Heart right ventricle (tissue), 16 donors: ENCODE measurements at regions of chr16 and their contacts with region 1.

Region 1: GRCh38 chr16:48054881-48055601 is 100.8 kb downstream of the ABCC12 start:
- DNase-seq: peak; percentile 24 to 47
- ATAC-seq: peak; percentile 47 to 91 (median 76)
- H3K4me3 ChIP-seq: peak overlapping the region in 3 of 10 donors; percentile 16 to 28 (median 20)
- H3K27ac ChIP-seq: no peak overlapping the region
- H3K4me1 ChIP-seq: peaks cover 0 to 24% (median 5%) of the 10 kb centered on the region in 9 donors
- H3K27me3 ChIP-seq: peaks cover 0 to 9% (median 0%) of the 10 kb centered on the region in 7 donors
- CTCF ChIP-seq: peak; percentile 54 to 85 (median 76)

Region 2: DNA sequence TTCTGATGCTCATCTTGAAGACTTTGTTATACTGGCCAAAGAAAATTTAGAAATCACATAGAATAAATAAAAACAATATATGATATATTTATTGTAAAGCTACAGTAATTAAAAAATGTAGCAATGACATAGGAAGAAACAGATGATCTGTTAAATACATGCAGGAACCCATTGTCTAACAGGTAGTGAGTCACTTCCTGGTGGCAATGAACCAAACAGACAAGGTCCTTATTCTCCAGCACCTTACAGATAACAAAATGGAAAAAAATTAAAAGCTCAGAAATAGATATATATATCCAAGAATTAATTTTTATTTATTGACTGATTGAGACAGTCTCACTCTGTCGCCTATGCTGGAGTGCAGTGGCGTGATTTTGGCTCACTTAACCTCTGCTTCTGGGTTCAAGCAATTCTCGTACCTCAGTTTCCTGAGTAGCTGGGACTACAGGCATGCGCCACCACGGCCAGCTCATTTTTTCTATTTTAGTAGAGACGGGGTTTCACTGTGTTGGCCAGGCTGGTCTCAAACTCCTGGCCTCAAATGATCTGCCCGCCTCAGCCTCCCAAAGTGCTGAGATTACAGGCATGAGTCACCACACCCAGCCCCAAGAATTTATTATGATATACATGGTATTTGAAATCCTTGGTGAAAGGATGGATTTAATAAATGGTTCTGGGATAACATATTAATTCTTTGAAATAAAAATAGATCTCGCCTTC is 918.8 kb before region 1 on chr16:
- intact Hi-C with region 1: loop called in 6 of 10 experiments (anchors 1 to 10 kb)
- DNase-seq: peak in 1 of 2 donors; percentile 44
- ATAC-seq: peak in 4 of 8 donors; percentile 52 to 80 (median 74)
- H3K4me3 ChIP-seq: no peak overlapping the region
- H3K27ac ChIP-seq: peak overlapping the region in 7 of 10 donors; percentile 16 to 67 (median 27)
- H3K4me1 ChIP-seq: peaks cover 0 to 9% (median 0%) of the 10 kb centered on the region in 9 donors
- H3K27me3 ChIP-seq: no peaks in the 10 kb centered on the region
- CTCF ChIP-seq: no peak

Region 3: GRCh38 chr16:48156790-48157209 is 101.8 kb after region 1 on chr16:
- intact Hi-C with region 1: loop called in 2 of 10 experiments (anchors 5 to 10 kb)
- DNase-seq: peak; percentile 87 to 89
- ATAC-seq: peak; percentile 83 to 95 (median 92)
- H3K4me3 ChIP-seq: peak overlapping the region in 5 of 10 donors; percentile 5 to 31 (median 21)
- H3K27ac ChIP-seq: peak overlapping the region in 7 of 10 donors; percentile 54 to 70 (median 62)
- H3K4me1 ChIP-seq: peaks cover 4 to 25% (median 10%) of the 10 kb centered on the region in 9 donors
- H3K27me3 ChIP-seq: peaks cover 0 to 8% (median 0%) of the 10 kb centered on the region in 7 donors
- CTCF ChIP-seq: peak; percentile 94 to 99 (median 98)

Region 4: DNA sequence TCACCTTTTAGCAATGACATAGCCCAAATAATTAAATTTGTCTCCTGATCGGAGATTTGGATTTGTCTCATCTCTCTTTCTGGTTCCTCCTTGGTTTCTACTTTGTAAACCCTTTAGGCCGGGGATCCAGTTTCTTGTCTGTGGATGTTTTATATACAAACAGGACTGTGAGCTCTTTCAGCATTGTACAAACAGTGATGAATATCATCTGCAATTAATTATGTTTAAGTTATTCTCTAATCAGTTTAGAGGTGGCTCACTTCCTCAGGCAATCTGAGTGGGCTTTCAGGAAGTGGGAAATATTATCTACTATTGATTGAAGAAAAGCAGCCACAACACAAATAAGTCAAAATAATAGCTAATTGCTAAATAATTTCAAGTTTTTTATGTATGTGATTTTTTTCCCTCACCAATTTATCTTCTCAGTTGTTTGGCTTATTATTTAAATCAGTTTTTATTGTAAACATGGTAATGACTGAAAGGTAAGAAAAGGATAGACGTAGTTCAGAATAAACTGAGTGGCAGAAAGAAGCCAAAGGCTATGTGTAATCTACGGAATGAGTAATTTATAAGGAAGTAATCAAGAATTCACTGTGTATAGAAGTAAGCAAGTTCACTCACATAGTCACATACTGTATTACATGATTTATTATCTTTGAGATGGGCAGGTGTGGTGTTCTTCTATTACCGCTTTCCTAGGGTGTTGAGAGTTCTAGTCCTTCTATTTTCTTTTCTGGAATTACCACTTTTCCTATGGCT is 195.7 kb after region 1 on chr16:
- intact Hi-C with region 1: no loop called
- DNase-seq: no peak
- ATAC-seq: no peak
- H3K4me3 ChIP-seq: no peak overlapping the region
- H3K27ac ChIP-seq: no peak overlapping the region
- H3K4me1 ChIP-seq: peaks cover 3 to 44% (median 29%) of the 10 kb centered on the region in 9 donors
- H3K27me3 ChIP-seq: no peaks in the 10 kb centered on the region
- CTCF ChIP-seq: no peak